ENCODE measurements at regions of chr7 and their contacts with region 1.

Region 1: DNA sequence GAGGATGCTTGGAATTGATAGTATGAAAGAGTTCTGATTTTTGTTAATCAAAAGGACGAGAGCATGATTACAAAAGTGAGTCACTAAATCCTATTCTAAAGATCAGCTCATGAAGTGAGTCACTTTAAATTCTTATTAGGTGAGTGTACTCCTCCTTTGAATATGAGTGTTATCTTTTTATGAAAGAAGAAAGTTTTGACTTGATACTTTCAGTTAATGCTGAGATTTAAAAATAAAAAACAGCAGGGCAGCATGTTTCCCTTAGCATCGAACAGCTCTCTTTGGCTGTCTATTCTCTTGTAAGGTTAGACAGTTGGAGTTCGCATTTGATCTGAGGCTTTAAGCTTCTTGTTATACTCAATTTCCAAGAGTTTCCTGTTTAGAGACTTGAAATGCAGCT is 222.0 kb downstream of the TWIST1 start:
- DNase-seq: no peak
- ATAC-seq: no peak
- H3K4me3 Mint-ChIP-seq: no peak overlapping the region
- H3K27ac Mint-ChIP-seq: no peak overlapping the region
- H3K4me1 Mint-ChIP-seq: peaks cover 6% of the 10 kb centered on the region; the same call in 1 of the 2 replicates
- H3K27me3 Mint-ChIP-seq: no peaks in the 10 kb centered on the region
- CTCF ChIP-seq: no peak

Region 2: GRCh38 chr7:18906901-18907300 is 11.4 kb after region 1 on chr7:
- CTCF ChIA-PET with region 1: interaction called, 11 read pairs
- POLR2A ChIA-PET with region 1: no interaction called
- DNase-seq: no peak
- ATAC-seq: peak; percentile 78
- H3K4me3 Mint-ChIP-seq: no peak overlapping the region
- H3K27ac Mint-ChIP-seq: no peak overlapping the region
- H3K4me1 Mint-ChIP-seq: peaks cover 11% of the 10 kb centered on the region
- H3K27me3 Mint-ChIP-seq: no peaks in the 10 kb centered on the region
- CTCF ChIP-seq: no peak